HEK293 (cell line): ENCODE measurements at regions of chr9 and their contacts with region 1.

Region 1: GRCh38 chr9:132575005-132575609 is 7.3 kb upstream of the BARHL1 start:
- H3K4me3 ChIP-seq: no peak overlapping the region
- H3K27ac ChIP-seq: no peak overlapping the region
- H3K4me1 ChIP-seq: no peaks in the 10 kb centered on the region
- CTCF ChIP-seq: peak; percentile 93

Region 2: GRCh38 chr9:132412089-132412488 is 163.0 kb before region 1 on chr9:
- CTCF ChIA-PET with region 1: interaction called, 54 read pairs
- POLR2A ChIA-PET with region 1: no interaction called
- H3K4me3 ChIP-seq: no peak overlapping the region
- H3K27ac ChIP-seq: no peak overlapping the region
- H3K4me1 ChIP-seq: no peaks in the 10 kb centered on the region
- CTCF ChIP-seq: peak; percentile 56; the same call in 1 of the 2 replicates

Region 3: GRCh38 chr9:132498531-132499210 is 76.4 kb before region 1 on chr9:
- CTCF ChIA-PET with region 1: interaction called, 11 read pairs
- POLR2A ChIA-PET with region 1: no interaction called
- H3K4me3 ChIP-seq: no peak overlapping the region
- H3K27ac ChIP-seq: no peak overlapping the region
- H3K4me1 ChIP-seq: no peaks in the 10 kb centered on the region
- CTCF ChIP-seq: no peak

Region 4: DNA sequence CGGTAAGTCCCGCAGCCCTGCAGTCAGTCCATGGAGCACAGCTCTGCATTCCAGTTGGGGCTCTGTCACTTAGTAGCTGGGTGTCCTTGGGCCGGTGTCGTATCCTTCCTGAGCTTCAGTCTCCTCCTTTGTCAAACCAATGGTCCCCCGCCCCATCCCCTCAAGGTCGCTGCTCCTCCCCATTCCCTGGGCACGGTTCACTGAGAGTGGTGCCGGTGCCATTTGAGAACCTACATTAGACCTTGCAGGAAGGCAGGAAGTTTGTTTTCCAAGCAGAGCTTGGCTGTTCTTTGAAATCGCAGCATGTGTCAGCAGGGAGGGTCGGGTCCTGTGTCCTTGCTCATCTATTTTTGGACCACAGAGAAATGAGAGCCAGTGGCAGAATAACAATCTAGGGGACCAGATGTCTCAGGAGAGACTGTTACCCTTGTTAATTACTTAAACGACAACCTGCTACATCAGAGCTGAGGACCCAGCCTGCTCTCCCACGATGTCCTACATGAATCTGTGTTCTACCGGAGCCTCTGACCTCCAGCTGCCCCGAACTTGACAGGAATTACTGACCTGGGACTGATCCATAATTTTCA is 14.4 kb before region 1 on chr9:
- CTCF ChIA-PET with region 1: interaction called, 28 read pairs
- POLR2A ChIA-PET with region 1: no interaction called
- H3K4me3 ChIP-seq: no peak overlapping the region
- H3K27ac ChIP-seq: no peak overlapping the region
- H3K4me1 ChIP-seq: no peaks in the 10 kb centered on the region
- CTCF ChIP-seq: no peak